ENCODE measurements at regions of chr12 and their contacts with region 1.

Region 1: GRCh38 chr12:1661553-1662335 is 29.1 kb upstream of the ADIPOR2 start:
- DNase-seq: peak; percentile 53
- ATAC-seq: peak; percentile 93
- H3K4me3 ChIP-seq: peak overlapping the region in 1 of 2 experiments; percentile 21; a peak in 1 of 4 replicates
- H3K27ac ChIP-seq: no peak overlapping the region
- H3K4me1 ChIP-seq: peaks cover 9% of the 10 kb centered on the region
- H3K27me3 ChIP-seq: no peaks in the 10 kb centered on the region
- CTCF ChIP-seq: no peak

Region 2: GRCh38 chr12:1939801-1940607 is 278.3 kb after region 1 on chr12:
- CTCF ChIA-PET with region 1: interaction called, 3 read pairs
- POLR2A ChIA-PET with region 1: no interaction called
- in situ Hi-C with region 1: no loop called
- intact Hi-C with region 1: loop called (anchors 10 kb)
- DNase-seq: peak; percentile 67
- ATAC-seq: peak; percentile 95
- H3K4me3 ChIP-seq: no peak overlapping the region
- H3K27ac ChIP-seq: peak overlapping the region; percentile 63
- H3K4me1 ChIP-seq: peaks cover 3% of the 10 kb centered on the region; the same call in 1 of the 2 replicates
- H3K27me3 ChIP-seq: no peaks in the 10 kb centered on the region
- CTCF ChIP-seq: peak; percentile 87

Region 3: GRCh38 chr12:2057041-2057794 is 395.5 kb after region 1 on chr12:
- CTCF ChIA-PET with region 1: no interaction called
- POLR2A ChIA-PET with region 1: no interaction called
- in situ Hi-C with region 1: no loop called
- intact Hi-C with region 1: no loop called
- DNase-seq: peak; percentile 7
- ATAC-seq: no peak
- H3K4me3 ChIP-seq: no peak overlapping the region
- H3K27ac ChIP-seq: no peak overlapping the region
- H3K4me1 ChIP-seq: no peaks in the 10 kb centered on the region
- H3K27me3 ChIP-seq: peaks cover 15% of the 10 kb centered on the region
- CTCF ChIP-seq: peak; percentile 81

Region 4: GRCh38 chr12:2094597-2094996 is 432.9 kb after region 1 on chr12:
- CTCF ChIA-PET with region 1: no interaction called
- POLR2A ChIA-PET with region 1: no interaction called
- in situ Hi-C with region 1: no loop called
- intact Hi-C with region 1: no loop called
- DNase-seq: no peak
- ATAC-seq: no peak
- H3K4me3 ChIP-seq: no peak overlapping the region
- H3K27ac ChIP-seq: no peak overlapping the region
- H3K4me1 ChIP-seq: no peaks in the 10 kb centered on the region
- H3K27me3 ChIP-seq: 0 out of 2 replicates have a peak, but pooled peaks cover 2% of the 10 kb centered on the region
- CTCF ChIP-seq: no peak